Endothelial cell of umbilical vein (primary cell): ENCODE measurements at regions of chr2 and their contacts with region 1.

Region 1: DNA sequence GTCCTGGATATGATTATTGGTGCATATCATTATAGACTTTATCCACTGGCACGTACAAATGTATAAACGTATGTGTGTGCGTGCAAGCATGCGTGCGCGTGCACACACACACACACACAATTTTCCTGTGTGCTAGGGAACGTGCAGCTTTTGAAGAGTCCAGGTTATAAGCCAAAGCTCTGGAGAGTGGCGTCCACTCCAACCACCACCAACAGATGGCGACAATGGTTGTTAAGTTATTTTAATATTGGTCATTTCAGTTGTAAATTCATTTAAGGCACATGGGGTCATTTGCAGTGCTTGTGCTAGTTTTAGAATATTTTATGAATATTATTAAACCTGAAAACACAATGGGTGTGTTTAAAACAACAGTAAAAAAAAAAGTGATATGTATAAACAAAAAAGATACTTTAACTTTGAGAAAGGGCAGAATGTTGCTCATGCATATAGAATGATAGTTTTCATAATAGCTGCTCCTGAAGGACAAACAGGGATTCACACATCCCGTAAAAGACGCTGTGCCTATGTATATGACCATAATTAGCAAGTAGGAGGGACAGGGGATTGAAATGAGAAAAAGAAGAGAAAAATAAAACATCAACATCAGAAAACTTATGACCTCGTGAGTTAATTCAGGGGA is 124.2 kb upstream of the ITGB6 start:
- DNase-seq: peak; percentile 74
- H3K4me3 ChIP-seq: no peak overlapping the region
- H3K27ac ChIP-seq: no peak overlapping the region
- H3K4me1 ChIP-seq: no peaks in the 10 kb centered on the region
- H3K27me3 ChIP-seq: no peaks in the 10 kb centered on the region
- CTCF ChIP-seq: peak; percentile 63
- POLR2A ChIP-seq: no peak

Region 2: GRCh38 chr2:160075171-160075570 is 249.1 kb before region 1 on chr2:
- CTCF ChIA-PET with region 1: no interaction called
- POLR2A ChIA-PET with region 1: no interaction called
- dilution Hi-C with region 1: no loop called
- intact Hi-C with region 1: no loop called
- DNase-seq: peak; percentile 89
- H3K4me3 ChIP-seq: no peak overlapping the region
- H3K27ac ChIP-seq: peak overlapping the region; percentile 7
- H3K4me1 ChIP-seq: peaks cover 26% of the 10 kb centered on the region
- H3K27me3 ChIP-seq: no peaks in the 10 kb centered on the region
- CTCF ChIP-seq: no peak
- POLR2A ChIP-seq: no peak

Region 3: DNA sequence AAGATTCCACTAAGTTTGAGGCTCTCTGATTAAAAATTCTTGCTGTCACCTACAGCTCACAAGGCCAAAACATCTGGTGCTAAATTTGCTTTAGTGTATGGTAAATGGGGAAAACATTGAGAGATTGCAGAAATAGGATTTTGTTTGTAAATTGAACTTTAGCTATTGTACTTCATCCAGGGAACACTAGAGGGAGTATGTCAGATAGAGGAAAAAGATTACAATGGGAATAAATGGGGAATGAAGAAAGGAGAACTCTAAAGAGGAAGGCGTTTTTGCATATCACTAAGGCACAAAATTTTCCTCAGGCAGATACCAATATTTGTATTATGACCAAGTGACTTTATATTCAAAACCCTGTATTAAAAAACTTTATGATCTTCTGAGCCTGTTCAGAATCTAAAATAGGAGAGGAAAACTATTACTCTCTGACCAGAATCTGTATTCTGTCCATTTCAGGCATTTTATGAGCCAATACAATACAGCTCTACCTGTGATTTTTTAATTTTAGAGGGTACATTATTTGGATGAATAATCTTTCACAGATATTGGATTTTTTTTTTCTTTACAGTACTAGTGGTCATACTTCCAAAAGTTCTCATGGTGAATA is 71.9 kb before region 1 on chr2:
- CTCF ChIA-PET with region 1: interaction called, 19 read pairs
- POLR2A ChIA-PET with region 1: no interaction called
- dilution Hi-C with region 1: no loop called
- intact Hi-C with region 1: no loop called
- DNase-seq: peak; percentile 58
- H3K4me3 ChIP-seq: no peak overlapping the region
- H3K27ac ChIP-seq: no peak overlapping the region
- H3K4me1 ChIP-seq: no peaks in the 10 kb centered on the region
- H3K27me3 ChIP-seq: no peaks in the 10 kb centered on the region
- CTCF ChIP-seq: peak; percentile 52 to 57
- POLR2A ChIP-seq: no peak

Region 4: DNA sequence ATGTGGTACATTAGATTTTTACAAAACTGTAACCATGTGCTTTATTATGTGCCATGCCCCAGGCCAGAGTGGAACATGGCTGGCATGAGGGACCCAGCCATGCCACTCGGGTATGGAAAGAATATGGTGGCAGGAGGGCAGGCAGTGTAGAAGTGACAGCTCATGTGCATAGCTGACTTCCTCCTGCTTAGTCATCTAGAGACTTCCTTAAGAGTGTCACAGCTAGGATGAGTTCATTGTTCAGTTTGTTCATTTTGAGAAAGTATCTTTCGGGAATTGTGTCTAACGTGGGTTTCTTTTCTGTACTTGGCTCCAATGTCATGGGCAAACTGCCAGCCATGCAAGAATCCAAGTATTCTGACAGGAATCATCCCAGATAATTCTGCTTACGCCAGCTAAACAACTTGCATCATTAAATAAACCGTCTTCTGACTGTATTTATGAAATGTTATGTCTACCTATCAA is 29.9 kb before region 1 on chr2:
- CTCF ChIA-PET with region 1: interaction called, 19 read pairs
- POLR2A ChIA-PET with region 1: no interaction called
- dilution Hi-C with region 1: no loop called
- intact Hi-C with region 1: no loop called
- DNase-seq: peak; percentile 51
- H3K4me3 ChIP-seq: no peak overlapping the region
- H3K27ac ChIP-seq: peak overlapping the region; percentile 29
- H3K4me1 ChIP-seq: peaks cover 54% of the 10 kb centered on the region
- H3K27me3 ChIP-seq: no peaks in the 10 kb centered on the region
- CTCF ChIP-seq: no peak
- POLR2A ChIP-seq: no peak

Region 5: DNA sequence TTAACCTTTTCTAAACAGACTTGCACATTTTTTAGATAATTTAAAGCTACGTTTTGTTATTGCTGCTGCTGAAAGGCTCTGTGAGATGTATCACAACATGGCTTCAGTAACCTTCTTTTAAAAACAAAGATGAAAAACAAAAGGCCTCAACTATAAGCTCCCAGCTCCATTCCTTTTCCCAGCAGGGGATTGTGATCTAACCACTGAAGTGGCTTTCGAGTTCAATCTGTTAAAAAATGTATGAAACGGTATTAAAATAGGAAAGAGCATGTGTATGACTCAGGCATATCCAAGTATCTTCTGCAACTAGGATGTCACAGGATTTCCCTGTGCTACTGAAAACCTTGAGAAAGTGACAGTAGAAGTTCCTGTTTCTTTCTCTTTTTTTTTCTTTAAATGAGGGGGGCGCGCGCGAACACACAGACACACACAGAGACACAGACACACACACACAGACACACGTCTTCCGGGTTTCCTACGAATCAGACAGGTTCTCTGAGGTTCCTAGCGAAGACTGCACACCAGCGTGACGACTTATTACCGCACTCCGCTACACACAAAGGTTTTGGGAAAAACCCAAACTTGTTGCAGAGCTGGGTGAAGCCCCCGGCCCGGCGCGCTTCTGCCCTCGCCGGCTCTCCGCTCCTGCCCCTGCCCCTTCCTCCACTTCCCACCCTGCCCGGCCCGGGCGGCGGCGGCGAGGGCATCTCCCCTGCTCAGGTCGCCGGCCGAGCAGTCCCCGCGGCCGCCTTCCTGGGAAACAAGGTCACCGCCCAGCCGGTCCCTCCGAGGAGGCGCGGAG is 82.5 kb after region 1 on chr2:
- CTCF ChIA-PET with region 1: interaction called, 11 read pairs
- POLR2A ChIA-PET with region 1: no interaction called
- dilution Hi-C with region 1: no loop called
- intact Hi-C with region 1: no loop called
- DNase-seq: peak; percentile 77
- H3K4me3 ChIP-seq: peak overlapping the region; percentile 89 to 98 (median 95)
- H3K27ac ChIP-seq: peak overlapping the region; percentile 90
- H3K4me1 ChIP-seq: peaks cover 72% of the 10 kb centered on the region
- H3K27me3 ChIP-seq: no peaks in the 10 kb centered on the region
- CTCF ChIP-seq: no peak
- POLR2A ChIP-seq: peak; percentile 49

Region 6: GRCh38 chr2:160533476-160533875 is 209.2 kb after region 1 on chr2:
- CTCF ChIA-PET with region 1: no interaction called
- POLR2A ChIA-PET with region 1: no interaction called
- dilution Hi-C with region 1: no loop called
- intact Hi-C with region 1: no loop called
- DNase-seq: no peak
- H3K4me3 ChIP-seq: no peak overlapping the region
- H3K27ac ChIP-seq: no peak overlapping the region
- H3K4me1 ChIP-seq: no peaks in the 10 kb centered on the region
- H3K27me3 ChIP-seq: no peaks in the 10 kb centered on the region
- CTCF ChIP-seq: no peak
- POLR2A ChIP-seq: no peak

Region 7: DNA sequence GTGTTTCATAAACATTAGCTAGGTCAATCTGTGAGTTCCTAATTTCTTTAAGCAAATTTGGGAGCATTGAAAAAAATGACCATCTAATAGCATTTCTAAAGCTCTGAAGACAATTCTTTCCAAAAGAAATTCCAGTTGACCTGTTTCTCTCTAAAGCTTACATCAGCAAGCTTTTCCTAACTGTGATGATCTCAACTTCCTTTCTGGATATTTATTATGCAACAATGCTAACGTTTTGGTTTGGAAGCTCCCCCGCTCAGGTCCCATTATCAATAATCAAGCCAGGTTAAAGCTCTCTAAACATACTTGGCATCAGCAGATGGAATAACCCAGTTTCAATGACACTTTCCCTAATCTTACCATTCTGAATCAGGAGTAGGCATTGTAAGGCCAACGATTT is 639.7 kb after region 1 on chr2:
- CTCF ChIA-PET with region 1: interaction called, 15 read pairs
- POLR2A ChIA-PET with region 1: no interaction called
- dilution Hi-C with region 1: no loop called
- intact Hi-C with region 1: no loop called
- DNase-seq: no peak
- H3K4me3 ChIP-seq: no peak overlapping the region
- H3K27ac ChIP-seq: no peak overlapping the region
- H3K4me1 ChIP-seq: no peaks in the 10 kb centered on the region
- H3K27me3 ChIP-seq: no peaks in the 10 kb centered on the region
- CTCF ChIP-seq: no peak
- POLR2A ChIP-seq: no peak